GM12878 (cell line): ENCODE measurements at regions of chr2 and their contacts with region 1.

Region 1: DNA sequence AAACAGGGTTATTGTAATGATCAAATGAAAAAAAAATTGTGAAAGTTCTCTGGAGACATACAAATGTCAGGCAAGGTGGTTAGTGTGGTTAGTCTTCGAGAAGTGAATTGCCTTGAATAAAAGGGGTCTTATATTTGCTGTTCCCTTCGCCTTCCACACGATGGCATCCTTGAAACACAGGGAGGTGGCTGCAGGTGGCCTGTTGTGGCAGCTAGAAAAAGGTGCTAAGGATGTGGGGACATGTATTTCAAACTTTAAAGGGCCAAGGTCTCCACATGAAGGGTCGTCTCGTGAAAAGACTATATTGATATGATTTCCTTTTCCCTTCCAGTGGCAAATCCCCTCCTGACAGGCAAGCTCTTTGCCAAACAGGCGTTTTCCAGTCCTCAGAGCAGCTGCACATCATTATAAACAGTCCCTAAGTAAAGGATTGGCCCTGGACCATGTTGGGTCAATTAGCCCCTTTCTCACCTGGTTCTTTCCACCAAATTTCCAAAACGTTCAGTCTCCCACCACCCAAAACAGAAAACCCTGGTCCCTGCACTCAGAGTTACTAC is 68.5 kb downstream of the COPS8 start:
- DNase-seq: no peak
- ATAC-seq: peak; percentile 61
- H3K4me3 ChIP-seq: no peak overlapping the region
- H3K27ac ChIP-seq: no peak overlapping the region
- H3K4me1 ChIP-seq: peaks cover 16% of the 10 kb centered on the region
- H3K27me3 ChIP-seq: no peaks in the 10 kb centered on the region
- CTCF ChIP-seq: peak; percentile 75 to 81 (median 79)
- EP300 ChIP-seq: no peak
- POLR2A ChIP-seq: no peak
- RAD21 ChIP-seq: peak; percentile 98

Region 2: GRCh38 chr2:237165405-237166276 is 11.5 kb after region 1 on chr2:
- CTCF ChIA-PET with region 1: interaction called, 10 read pairs
- POLR2A ChIA-PET with region 1: no interaction called
- RAD21 ChIA-PET with region 1: no interaction called
- SMC1A ChIA-PET with region 1: interaction called, 4 read pairs
- in situ Hi-C with region 1: no loop called
- intact Hi-C with region 1: no loop called
- DNase-seq: no peak
- ATAC-seq: no peak
- H3K4me3 ChIP-seq: no peak overlapping the region
- H3K27ac ChIP-seq: no peak overlapping the region
- H3K4me1 ChIP-seq: no peaks in the 10 kb centered on the region
- H3K27me3 ChIP-seq: peaks cover 0 to 2% of the 10 kb centered on the region in 2 experiments; a peak in 1 of 4 replicates
- CTCF ChIP-seq: peak; percentile 25 to 46 (median 32); a peak in 4 of 6 replicates
- EP300 ChIP-seq: no peak
- POLR2A ChIP-seq: no peak
- RAD21 ChIP-seq: no peak

Region 3: DNA sequence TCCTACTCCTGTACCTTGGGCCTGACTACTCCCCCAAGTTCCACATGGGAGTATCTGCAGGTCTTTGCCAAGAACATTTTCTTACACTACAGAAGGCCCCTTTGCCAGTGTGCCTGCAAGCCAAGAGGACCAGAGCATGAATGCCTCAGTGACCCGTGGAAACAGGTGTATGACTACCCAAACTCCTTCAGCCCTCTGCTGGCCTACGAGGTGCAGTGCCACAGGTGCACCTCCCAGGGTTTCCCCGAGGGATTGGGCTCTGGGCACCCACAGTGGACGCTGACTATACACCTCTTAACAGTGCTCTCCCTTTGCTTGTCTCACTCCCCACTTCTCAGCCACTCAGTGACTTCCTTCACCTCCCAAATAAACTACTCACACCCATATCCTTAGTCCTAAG is 168.4 kb after region 1 on chr2:
- CTCF ChIA-PET with region 1: no interaction called
- POLR2A ChIA-PET with region 1: no interaction called
- RAD21 ChIA-PET with region 1: no interaction called
- SMC1A ChIA-PET with region 1: no interaction called
- in situ Hi-C with region 1: no loop called
- intact Hi-C with region 1: loop called (anchors 1 kb)
- DNase-seq: no peak
- ATAC-seq: peak; percentile 76
- H3K4me3 ChIP-seq: no peak overlapping the region
- H3K27ac ChIP-seq: no peak overlapping the region
- H3K4me1 ChIP-seq: no peaks in the 10 kb centered on the region
- H3K27me3 ChIP-seq: peaks cover 0 to 2% of the 10 kb centered on the region in 2 experiments; a peak in 1 of 4 replicates
- CTCF ChIP-seq: peak; percentile 41 to 49 (median 46); a peak in 5 of 6 replicates
- EP300 ChIP-seq: no peak
- POLR2A ChIP-seq: no peak
- RAD21 ChIP-seq: peak; percentile 27; the same call in 1 of the 2 replicates

Region 4: DNA sequence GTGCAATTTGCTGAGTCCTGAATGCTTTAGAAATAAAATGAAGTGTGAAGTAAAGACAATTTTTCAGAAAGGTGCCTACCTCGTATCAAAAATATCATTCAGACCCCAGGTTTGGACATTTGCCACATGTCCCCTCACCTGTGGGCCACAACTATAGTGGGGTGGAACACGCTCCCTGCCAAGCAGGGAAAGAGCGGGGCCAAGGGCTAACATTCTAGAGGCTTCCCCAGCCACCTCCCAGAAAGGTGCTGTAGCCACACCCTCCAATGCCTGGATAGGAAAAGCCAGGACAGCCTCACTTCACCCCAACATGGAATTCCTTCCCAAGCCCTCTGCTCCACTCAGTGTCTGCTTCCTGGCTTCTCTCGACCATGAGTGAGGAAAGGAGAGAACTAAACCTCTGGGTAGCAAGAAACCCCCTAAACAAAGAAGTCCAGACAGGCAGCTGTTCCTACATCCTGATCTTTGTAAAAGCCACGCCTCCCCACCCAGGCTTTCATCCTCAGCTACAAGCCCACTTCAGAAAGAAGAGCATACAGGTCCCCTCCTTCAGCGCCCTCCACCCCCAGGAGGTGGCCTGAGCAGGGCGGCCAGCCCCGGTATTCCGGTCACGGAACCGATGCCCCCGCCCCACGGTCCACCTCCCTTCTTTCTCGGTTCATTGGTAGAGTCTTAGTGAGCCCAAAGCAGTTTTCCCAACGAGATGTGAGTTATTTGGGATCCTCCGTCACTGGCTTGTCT is 257.7 kb after region 1 on chr2:
- CTCF ChIA-PET with region 1: interaction called, 14 read pairs
- POLR2A ChIA-PET with region 1: no interaction called
- RAD21 ChIA-PET with region 1: interaction called, 3 read pairs
- SMC1A ChIA-PET with region 1: interaction called, 4 read pairs
- in situ Hi-C with region 1: no loop called
- intact Hi-C with region 1: loop called (anchors 2 kb)
- DNase-seq: no peak
- ATAC-seq: no peak
- H3K4me3 ChIP-seq: no peak overlapping the region
- H3K27ac ChIP-seq: no peak overlapping the region
- H3K4me1 ChIP-seq: no peaks in the 10 kb centered on the region
- H3K27me3 ChIP-seq: peaks cover 2% of the 10 kb centered on the region in 2 experiments; a peak in 3 of 4 replicates
- CTCF ChIP-seq: no peak
- EP300 ChIP-seq: no peak
- POLR2A ChIP-seq: no peak
- RAD21 ChIP-seq: no peak

Region 5: DNA sequence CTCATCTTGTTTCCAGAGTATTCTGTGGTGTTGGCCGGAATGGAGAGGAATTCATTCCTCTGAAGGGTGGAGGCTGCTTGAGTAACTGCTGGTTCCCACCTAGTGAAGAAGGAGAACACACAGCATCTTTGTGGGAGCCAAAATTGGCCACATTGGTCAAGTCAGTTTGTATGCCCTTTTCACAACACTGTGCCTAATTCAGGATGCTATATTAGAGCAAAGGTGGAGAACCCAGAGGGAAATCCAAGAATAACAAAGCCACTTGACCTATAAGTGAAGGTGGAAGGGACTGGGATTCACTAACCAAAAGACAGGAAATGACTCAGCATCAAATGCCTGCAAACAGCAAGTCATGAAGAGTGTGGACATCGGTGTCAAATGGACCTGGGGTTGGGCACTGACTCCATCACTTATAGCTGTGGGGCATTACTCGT is 305.6 kb after region 1 on chr2:
- CTCF ChIA-PET with region 1: no interaction called
- POLR2A ChIA-PET with region 1: no interaction called
- RAD21 ChIA-PET with region 1: no interaction called
- SMC1A ChIA-PET with region 1: no interaction called
- in situ Hi-C with region 1: no loop called
- intact Hi-C with region 1: no loop called
- DNase-seq: no peak
- ATAC-seq: no peak
- H3K4me3 ChIP-seq: no peak overlapping the region
- H3K27ac ChIP-seq: no peak overlapping the region
- H3K4me1 ChIP-seq: no peaks in the 10 kb centered on the region
- H3K27me3 ChIP-seq: no peaks in the 10 kb centered on the region
- CTCF ChIP-seq: no peak
- EP300 ChIP-seq: no peak
- POLR2A ChIP-seq: no peak
- RAD21 ChIP-seq: no peak

Region 6: DNA sequence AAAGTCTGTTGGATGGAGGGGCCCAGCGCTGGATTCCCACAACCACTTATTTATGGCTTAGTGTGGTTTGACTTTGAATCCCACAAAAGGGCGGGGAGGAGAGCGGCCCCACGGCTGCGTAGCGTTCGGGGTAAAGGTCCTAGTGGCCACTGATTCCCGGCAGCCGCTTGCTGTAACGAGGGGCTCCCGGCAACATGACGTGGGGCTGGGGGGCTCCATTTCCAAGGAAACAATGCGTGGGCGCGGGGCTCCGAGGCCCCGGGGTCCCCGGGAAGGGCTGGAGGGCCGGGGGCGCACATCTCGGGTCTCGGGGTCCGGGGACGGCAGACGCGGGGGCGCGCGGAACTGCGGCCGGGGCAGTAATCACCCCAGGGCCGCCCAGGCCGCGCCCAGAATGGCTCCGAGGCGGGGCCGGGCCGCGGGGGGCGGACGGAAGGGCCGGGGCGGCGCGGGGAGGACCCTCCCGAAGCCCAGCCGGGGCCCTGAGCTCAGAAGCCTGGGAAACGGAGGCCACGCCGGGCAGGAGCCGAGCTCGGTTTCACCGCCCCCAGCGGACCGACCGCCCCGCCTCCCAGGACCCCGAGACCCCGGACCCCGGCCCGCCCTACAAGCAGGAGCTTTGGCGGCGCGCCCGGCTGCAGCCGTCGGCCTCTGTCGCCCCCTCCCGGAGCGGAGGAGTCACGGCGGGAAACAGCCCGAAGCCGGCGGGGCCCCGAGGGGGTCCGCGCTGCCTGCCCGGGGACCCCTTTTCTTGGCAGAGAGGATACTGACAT is 321.0 kb after region 1 on chr2:
- CTCF ChIA-PET with region 1: interaction called, 27 read pairs
- POLR2A ChIA-PET with region 1: no interaction called
- RAD21 ChIA-PET with region 1: interaction called, 9 read pairs
- SMC1A ChIA-PET with region 1: interaction called, 4 read pairs
- in situ Hi-C with region 1: loop called (anchors 5 kb)
- intact Hi-C with region 1: loop called (anchors 1 kb)
- DNase-seq: no peak
- ATAC-seq: peak; percentile 98
- H3K4me3 ChIP-seq: peak overlapping the region; percentile 94
- H3K27ac ChIP-seq: no peak overlapping the region
- H3K4me1 ChIP-seq: peaks cover 6% of the 10 kb centered on the region; the same call in 1 of the 2 replicates
- H3K27me3 ChIP-seq: peaks cover 6% of the 10 kb centered on the region in 2 experiments; a peak in 3 of 4 replicates
- CTCF ChIP-seq: peak; percentile 76 to 91 (median 85)
- EP300 ChIP-seq: no peak
- POLR2A ChIP-seq: 0 out of 2 replicates have a peak, but pooled peaks have one; percentile 52
- RAD21 ChIP-seq: peak; percentile 78